Body of pancreas (tissue), 4 donors: ENCODE measurements at regions of chr19 and their contacts with region 1.

Region 1: DNA sequence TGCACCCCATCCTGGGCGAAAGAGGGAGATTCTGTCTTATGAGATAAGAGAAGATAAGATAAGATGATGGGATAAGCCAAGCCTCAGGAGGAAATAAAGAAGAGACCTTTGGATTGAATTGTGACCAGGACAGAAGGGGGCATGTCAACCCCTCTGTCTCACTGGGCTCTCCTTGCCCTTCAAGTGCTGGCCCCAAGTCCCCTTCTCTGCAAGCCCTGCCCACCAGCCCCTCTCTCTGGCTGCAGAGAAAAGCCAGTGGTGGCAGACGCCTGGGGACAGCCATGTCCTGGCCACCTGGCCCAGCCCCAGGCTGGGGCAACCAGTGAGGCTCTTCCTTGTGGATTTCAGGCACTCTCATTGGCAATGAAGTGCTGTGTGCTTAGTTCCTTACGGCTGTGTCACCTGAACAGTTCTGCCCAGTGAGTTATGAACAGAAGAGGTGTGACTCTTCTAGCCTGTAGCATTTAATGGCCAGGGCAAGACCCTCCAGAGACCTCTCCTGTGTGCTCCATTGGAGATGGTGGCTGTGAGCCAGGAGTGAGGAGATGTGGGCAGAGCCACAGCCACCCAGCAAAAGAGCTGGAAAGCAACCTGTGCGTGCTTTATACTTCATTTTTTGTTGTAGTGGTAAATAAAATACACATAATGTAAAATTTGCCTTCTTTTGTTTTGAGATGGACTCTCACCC is 6.1 kb upstream of the BTBD2 start:
- DNase-seq: no peak
- ATAC-seq: no peak
- H3K4me3 ChIP-seq: no peak overlapping the region
- H3K27ac ChIP-seq: no peak overlapping the region
- H3K4me1 ChIP-seq: no peaks in the 10 kb centered on the region
- H3K27me3 ChIP-seq: no peaks in the 10 kb centered on the region
- CTCF ChIP-seq: no peak
- POLR2A ChIP-seq: no peak

Region 2: DNA sequence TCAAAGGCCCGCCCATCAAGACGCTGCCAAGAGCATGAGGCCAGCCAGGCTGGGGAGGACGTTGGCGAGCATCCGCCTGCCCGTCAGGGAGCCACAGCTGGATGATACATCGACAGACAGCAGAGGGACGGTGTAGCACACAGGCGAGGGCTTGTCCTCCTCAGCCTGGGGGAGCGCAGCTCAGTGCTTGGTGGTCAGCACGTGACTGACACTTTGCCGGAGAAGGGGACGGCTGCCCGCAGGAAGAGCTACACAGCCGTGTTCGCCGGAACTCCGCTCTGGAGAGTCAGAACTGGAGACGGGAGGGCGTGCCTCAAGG is 46.5 kb before region 1 on chr19:
- intact Hi-C with region 1: no loop called
- DNase-seq: no peak
- ATAC-seq: no peak
- H3K4me3 ChIP-seq: no peak overlapping the region
- H3K27ac ChIP-seq: no peak overlapping the region
- H3K4me1 ChIP-seq: no peaks in the 10 kb centered on the region
- H3K27me3 ChIP-seq: no peaks in the 10 kb centered on the region
- CTCF ChIP-seq: no peak
- POLR2A ChIP-seq: no peak

Region 3: DNA sequence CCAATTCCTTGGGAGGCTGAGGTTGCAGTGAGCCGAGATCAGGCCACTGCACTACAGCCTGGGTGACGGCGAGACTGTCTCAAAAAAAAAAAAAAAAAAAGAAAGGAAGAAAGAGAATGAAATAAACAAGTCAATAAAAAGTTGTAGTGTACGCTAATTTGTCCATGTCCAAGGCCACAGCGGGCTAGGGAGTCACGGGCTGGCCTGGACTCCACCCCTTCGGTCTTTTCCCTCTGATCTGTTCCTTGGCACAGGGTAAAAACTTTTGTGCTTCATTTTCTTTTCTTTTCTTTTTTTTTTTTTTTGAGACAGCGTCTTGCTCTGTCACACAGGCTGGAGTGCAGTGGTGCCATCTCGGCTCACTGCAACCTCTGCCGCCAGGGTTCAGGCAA is 48.8 kb after region 1 on chr19:
- intact Hi-C with region 1: loop called (anchors 5 kb)
- DNase-seq: peak in 2 of 4 donors; percentile 38 to 48
- ATAC-seq: peak; percentile 48
- H3K4me3 ChIP-seq: no peak overlapping the region
- H3K27ac ChIP-seq: peak overlapping the region in 2 of 4 donors; percentile 15 to 41
- H3K4me1 ChIP-seq: peaks cover 15% of the 10 kb centered on the region
- H3K27me3 ChIP-seq: no peaks in the 10 kb centered on the region
- CTCF ChIP-seq: no peak
- POLR2A ChIP-seq: no peak